PC-9 (cell line): ENCODE measurements at regions of chr7 and their contacts with region 1.

Region 1: DNA sequence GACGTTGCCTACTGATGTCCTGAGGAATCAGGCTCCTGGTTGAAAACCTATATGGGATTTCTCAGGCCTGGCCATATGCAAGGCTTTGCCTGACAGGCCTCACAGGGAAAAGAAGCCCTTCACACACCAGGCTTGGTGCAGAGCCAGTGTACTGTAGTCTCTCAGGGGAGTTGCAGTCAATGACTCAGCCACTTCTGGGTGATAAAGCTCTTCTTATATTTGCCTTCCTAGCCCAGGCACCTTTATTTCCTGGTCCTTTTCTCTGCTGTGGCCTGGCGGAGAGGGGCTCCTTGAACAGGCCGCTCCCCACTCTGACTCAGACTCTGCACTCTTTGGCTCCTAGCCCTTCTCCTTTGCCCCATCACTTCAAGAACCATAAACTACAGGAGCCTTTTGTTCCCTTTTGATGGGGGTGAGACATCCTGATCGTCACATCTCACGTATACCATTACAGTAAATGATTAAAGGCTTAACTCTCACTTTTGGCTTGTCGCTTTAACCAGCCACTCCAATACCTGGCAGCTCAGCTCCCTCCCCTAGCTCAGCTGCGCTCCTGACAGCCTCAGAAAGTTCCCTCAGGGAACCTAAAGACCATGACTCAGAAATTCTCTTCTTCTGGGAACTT is 33.5 kb downstream of the DPY19L1 start:
- DNase-seq: peak; percentile 88 to 99
- H3K4me3 ChIP-seq: peak overlapping the region; percentile 28; the same call in 1 of the 2 replicates
- H3K27ac ChIP-seq: peak overlapping the region; percentile 94
- H3K4me1 ChIP-seq: peaks cover 45% of the 10 kb centered on the region
- H3K27me3 ChIP-seq: no peaks in the 10 kb centered on the region
- CTCF ChIP-seq: no peak

Region 2: DNA sequence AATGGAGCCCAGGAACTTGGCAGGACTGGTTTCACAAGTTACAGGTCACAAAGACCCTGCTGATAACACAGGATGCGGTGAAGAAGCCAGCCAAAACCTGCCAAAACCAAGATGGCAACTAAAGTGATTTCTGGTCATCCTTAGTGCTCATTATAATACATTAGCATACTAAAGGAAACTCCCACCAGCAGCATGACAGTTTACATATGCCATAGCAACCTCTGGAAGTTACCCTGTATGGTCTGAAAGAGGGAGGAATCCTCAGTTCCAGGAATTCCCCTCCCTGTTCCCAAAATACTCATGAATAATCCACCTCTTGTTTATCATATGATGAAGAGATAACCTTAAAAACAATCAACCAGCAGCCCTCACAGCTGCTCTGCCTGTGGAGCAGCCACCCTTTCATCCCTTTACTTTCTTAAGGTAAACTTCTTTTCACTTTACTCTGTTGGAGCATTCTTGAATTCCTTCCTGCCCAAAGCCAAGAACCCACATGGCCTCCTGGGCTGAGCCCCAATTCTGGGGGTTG is 11.6 kb after region 1 on chr7:
- CTCF ChIA-PET with region 1: no interaction called
- POLR2A ChIA-PET with region 1: no interaction called
- intact Hi-C with region 1: loop called (anchors 1 kb)
- DNase-seq: peak in 1 of 2 experiments; percentile 48
- H3K4me3 ChIP-seq: no peak overlapping the region
- H3K27ac ChIP-seq: no peak overlapping the region
- H3K4me1 ChIP-seq: no peaks in the 10 kb centered on the region
- H3K27me3 ChIP-seq: no peaks in the 10 kb centered on the region
- CTCF ChIP-seq: no peak

Region 3: DNA sequence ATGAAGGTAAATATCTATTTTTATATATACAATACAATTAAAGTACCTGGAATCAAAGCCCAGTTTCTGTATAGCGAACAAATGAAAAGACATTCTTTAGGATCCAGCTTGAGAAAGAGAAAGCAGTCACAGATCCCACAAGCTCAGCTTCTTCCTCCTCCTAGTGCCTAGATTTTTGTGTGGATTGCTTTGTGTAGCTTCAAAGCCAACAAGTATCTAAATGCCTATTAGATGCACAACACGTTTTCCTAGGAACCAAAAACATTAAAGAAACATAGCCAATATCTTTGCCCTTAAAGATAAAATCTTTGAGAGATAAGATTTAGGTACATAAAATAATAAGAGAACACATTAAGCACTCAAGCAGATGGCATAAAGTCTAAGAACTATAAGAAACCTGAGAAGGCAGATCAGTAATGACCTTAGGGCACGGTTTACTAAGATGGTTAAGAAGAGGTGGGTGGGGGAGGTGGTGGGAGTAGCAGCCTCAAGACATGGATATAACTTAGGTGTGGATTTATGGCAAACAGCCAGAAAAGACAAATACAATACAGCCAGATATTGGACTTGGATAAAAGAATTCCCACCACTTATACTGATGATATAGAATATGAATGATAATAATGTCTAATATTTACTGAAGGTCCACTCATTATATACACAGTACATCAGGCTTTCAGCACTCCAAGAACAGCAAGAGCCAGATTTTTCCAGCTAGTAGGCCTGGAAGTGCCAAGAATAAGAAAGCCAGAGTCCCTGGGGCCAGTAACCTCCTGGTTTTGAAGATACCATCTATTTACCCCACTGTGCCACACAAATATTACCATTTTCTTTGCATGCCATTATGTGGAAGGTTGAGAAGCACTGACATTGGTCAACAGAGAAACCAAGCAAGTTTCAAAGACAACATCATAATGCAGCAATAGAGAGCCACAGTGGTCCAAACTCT is 21.5 kb after region 1 on chr7:
- CTCF ChIA-PET with region 1: no interaction called
- POLR2A ChIA-PET with region 1: no interaction called
- intact Hi-C with region 1: loop called (anchors 1 kb)
- DNase-seq: peak; percentile 42 to 68
- H3K4me3 ChIP-seq: no peak overlapping the region
- H3K27ac ChIP-seq: no peak overlapping the region
- H3K4me1 ChIP-seq: peaks cover 31% of the 10 kb centered on the region
- H3K27me3 ChIP-seq: no peaks in the 10 kb centered on the region
- CTCF ChIP-seq: no peak